Endothelial cell of umbilical vein (primary cell): ENCODE measurements at regions of chr2 and their contacts with region 1.

Region 1: GRCh38 chr2:32946314-32947075 is at the start of gene LTBP1:
- DNase-seq: peak; percentile 77
- H3K4me3 ChIP-seq: peak within 1 kb of the TSS; percentile 50 to 86 (median 55)
- H3K27ac ChIP-seq: peak within 1 kb of the TSS; percentile 58
- H3K4me1 ChIP-seq: peaks cover 10% of the 10 kb centered on the region
- H3K27me3 ChIP-seq: no peaks in the 10 kb centered on the region
- CTCF ChIP-seq: peak; percentile 88 to 90
- POLR2A ChIP-seq: peak; percentile 14
- total RNA-seq, gene LTBP1: 68.2 and 107 TPM in 2 replicates

Region 2: DNA sequence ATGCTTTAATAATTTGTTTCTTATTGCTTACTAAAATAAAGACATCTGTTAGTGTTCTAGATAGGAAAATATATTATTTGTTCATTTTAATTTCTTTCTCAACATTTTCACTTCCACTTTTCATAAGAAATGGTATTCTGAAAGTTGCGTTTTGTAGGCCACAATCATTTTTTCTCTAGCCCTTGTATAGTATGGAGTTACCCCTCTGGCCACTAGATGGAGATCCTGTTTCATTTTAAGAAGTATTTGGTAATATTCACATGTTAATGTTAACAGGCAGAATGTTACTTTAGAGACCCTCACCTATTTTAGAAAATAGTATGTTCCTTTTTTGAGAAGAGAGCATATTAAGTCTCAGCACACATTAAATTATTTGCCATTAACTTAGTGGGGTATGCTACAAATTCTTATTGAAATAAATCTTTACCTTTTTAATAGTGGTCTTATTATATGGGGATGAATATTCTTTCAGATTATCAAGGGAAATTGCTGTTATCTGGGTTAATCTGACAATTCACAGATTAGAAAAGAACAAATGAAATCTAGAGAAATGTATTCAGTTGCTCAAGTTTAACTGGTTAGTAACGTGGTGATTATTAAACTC is 392.6 kb before region 1 on chr2:
- CTCF ChIA-PET with region 1: no interaction called
- POLR2A ChIA-PET with region 1: no interaction called
- dilution Hi-C with region 1: no loop called
- intact Hi-C with region 1: loop called (anchors 1 kb)
- DNase-seq: peak; percentile 63
- H3K4me3 ChIP-seq: no peak overlapping the region
- H3K27ac ChIP-seq: no peak overlapping the region
- H3K4me1 ChIP-seq: peaks cover 7% of the 10 kb centered on the region
- H3K27me3 ChIP-seq: no peaks in the 10 kb centered on the region
- CTCF ChIP-seq: peak; percentile 50
- POLR2A ChIP-seq: no peak

Region 3: DNA sequence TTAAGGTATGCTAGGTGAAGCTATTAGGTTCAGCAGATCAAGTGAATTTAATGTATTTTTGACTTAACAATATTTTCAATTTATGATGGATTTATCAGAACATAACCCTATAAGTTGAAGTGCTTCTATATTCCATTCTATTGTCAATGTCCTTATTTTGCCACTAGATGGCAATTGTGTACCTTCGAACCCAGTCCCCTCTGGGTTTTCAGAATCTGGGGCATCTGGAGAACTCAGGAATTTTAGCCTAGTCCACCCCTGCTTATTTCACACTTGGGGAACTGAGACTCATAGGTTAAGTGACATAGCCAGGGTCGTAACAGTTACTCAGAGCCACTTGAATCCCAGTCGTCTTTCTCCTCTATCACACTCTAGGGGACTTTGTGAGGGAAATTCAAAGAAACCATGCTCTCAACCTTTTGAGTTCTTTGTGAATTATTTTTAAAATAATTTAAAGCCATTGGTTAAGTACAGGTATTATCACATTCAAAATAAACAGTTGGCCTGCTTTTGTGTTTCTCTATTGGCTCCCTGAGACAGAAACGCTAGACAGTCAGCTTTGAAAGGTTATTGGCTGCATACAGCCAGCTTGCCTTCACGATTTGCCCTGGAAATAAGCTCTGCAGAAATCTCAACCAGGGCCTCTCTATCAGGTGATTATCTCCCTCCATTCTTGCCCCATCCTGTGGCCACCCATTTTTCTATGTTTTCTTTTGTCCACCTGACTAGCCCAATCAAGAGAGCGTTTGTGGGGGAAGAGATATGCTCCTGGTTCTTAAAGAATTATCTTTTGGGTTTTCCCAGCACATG is 173.7 kb before region 1 on chr2:
- CTCF ChIA-PET with region 1: interaction called, 23 read pairs
- POLR2A ChIA-PET with region 1: no interaction called
- dilution Hi-C with region 1: no loop called
- intact Hi-C with region 1: loop called (anchors 1 kb)
- DNase-seq: peak; percentile 75
- H3K4me3 ChIP-seq: no peak overlapping the region
- H3K27ac ChIP-seq: no peak overlapping the region
- H3K4me1 ChIP-seq: peaks cover 3% of the 10 kb centered on the region
- H3K27me3 ChIP-seq: no peaks in the 10 kb centered on the region
- CTCF ChIP-seq: peak; percentile 38 to 53
- POLR2A ChIP-seq: no peak

Region 4: DNA sequence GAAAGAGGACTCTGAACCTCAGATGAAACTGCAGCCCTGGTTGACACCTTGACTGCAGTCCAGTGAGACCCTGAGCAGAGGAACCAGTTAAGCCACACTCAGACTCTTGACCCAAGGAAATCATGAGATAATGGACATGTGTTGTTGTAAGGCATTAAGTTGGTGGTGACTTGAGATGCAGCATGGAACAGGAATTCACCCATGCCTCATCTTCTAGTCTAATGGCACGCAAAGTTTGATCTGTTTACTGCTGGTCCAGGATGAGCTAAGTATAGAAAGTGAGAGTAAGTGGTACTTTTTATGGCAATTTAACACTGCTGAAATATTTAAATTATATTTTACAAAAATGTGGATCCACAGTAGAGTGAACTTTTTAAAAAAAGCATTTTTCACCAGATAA is 51.1 kb before region 1 on chr2:
- CTCF ChIA-PET with region 1: no interaction called
- POLR2A ChIA-PET with region 1: no interaction called
- dilution Hi-C with region 1: no loop called
- intact Hi-C with region 1: no loop called
- DNase-seq: no peak
- H3K4me3 ChIP-seq: no peak overlapping the region
- H3K27ac ChIP-seq: no peak overlapping the region
- H3K4me1 ChIP-seq: no peaks in the 10 kb centered on the region
- H3K27me3 ChIP-seq: peaks cover 14 to 26% of the 10 kb centered on the region in 2 experiments
- CTCF ChIP-seq: no peak
- POLR2A ChIP-seq: no peak

Region 5: GRCh38 chr2:32977228-32977758 is 30.8 kb after region 1 on chr2:
- CTCF ChIA-PET with region 1: no interaction called
- POLR2A ChIA-PET with region 1: no interaction called
- dilution Hi-C with region 1: no loop called
- intact Hi-C with region 1: no loop called
- DNase-seq: peak; percentile 26
- H3K4me3 ChIP-seq: no peak overlapping the region
- H3K27ac ChIP-seq: no peak overlapping the region
- H3K4me1 ChIP-seq: no peaks in the 10 kb centered on the region
- H3K27me3 ChIP-seq: no peaks in the 10 kb centered on the region
- CTCF ChIP-seq: no peak
- POLR2A ChIP-seq: no peak

Region 6: GRCh38 chr2:33033606-33034081 is 87.1 kb after region 1 on chr2:
- CTCF ChIA-PET with region 1: interaction called, 13 read pairs
- POLR2A ChIA-PET with region 1: no interaction called
- dilution Hi-C with region 1: no loop called
- intact Hi-C with region 1: no loop called
- DNase-seq: peak; percentile 67
- H3K4me3 ChIP-seq: no peak overlapping the region
- H3K27ac ChIP-seq: no peak overlapping the region
- H3K4me1 ChIP-seq: peaks cover 15% of the 10 kb centered on the region
- H3K27me3 ChIP-seq: no peaks in the 10 kb centered on the region
- CTCF ChIP-seq: peak; percentile 13 to 46
- POLR2A ChIP-seq: no peak

Region 7: GRCh38 chr2:33267756-33268155 is 321.3 kb after region 1 on chr2:
- CTCF ChIA-PET with region 1: no interaction called
- POLR2A ChIA-PET with region 1: no interaction called
- dilution Hi-C with region 1: no loop called
- intact Hi-C with region 1: loop called (anchors 5 kb)
- DNase-seq: peak; percentile 79
- H3K4me3 ChIP-seq: no peak overlapping the region
- H3K27ac ChIP-seq: no peak overlapping the region
- H3K4me1 ChIP-seq: peaks cover 6% of the 10 kb centered on the region
- H3K27me3 ChIP-seq: no peaks in the 10 kb centered on the region
- CTCF ChIP-seq: no peak
- POLR2A ChIP-seq: no peak

Region 8: DNA sequence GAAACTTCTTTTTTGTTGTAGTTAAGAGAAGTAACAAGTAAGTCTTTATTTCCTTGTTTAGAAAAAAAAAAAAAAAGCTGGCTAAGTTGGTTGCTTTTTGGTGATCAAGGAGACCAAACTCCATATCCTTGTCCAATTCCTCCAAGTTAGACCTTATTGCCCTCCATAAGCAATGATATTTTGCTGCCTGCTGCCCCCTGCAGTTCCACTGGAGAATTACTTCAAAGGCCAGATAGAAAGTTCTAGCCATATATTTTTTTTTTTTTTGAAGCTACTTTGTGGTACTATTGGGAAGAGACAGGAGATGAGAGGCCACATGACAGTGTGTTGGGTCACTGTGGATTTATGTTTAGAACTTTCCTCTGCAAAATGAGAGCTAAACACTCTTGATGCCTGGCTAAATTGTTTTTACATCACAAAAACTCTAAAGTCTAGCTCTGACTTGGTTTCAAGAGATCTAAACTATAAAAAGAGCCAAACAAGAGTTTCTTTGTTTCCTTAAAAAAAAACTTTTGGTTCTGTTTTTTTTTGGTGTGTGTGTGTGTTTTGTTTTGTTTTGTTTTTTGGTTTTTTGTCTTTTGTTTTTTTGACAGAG is 449.3 kb after region 1 on chr2:
- CTCF ChIA-PET with region 1: interaction called, 6 read pairs
- POLR2A ChIA-PET with region 1: no interaction called
- dilution Hi-C with region 1: no loop called
- intact Hi-C with region 1: loop called (anchors 1 kb)
- DNase-seq: peak; percentile 76
- H3K4me3 ChIP-seq: no peak overlapping the region
- H3K27ac ChIP-seq: no peak overlapping the region
- H3K4me1 ChIP-seq: no peaks in the 10 kb centered on the region
- H3K27me3 ChIP-seq: no peaks in the 10 kb centered on the region
- CTCF ChIP-seq: peak; percentile 56 to 58
- POLR2A ChIP-seq: no peak